ENCODE measurements at regions of chr15 and their contacts with region 1.

Region 1: DNA sequence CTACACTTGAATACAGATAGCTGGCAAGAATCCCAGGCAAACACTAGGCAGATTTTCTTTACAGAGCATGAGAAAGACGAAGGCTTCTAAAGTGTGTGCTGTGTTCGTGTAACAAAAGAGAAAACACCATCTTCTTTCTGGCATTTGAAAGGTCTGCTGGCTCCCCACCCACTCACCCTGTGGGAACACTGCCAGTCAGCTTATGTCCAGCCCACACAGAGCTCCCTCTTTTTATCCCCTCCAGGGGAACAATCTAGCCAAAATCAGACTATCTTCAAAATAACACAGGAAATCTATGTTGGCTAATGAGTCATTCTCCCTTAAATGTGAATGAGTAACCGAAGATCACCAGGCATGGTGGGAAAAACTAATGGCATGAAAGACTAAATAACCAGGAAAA is 45.6 kb upstream of the PAQR5 start:
- DNase-seq: no peak
- H3K4me3 ChIP-seq: no peak overlapping the region
- H3K27ac ChIP-seq: no peak overlapping the region
- H3K4me1 ChIP-seq: peaks cover 0 to 3% (median 0%) of the 10 kb centered on the region in 4 donors
- H3K27me3 ChIP-seq: no peaks in the 10 kb centered on the region
- CTCF ChIP-seq: no peak
- EP300 ChIP-seq: no peak
- POLR2A ChIP-seq: no peak

Region 2: DNA sequence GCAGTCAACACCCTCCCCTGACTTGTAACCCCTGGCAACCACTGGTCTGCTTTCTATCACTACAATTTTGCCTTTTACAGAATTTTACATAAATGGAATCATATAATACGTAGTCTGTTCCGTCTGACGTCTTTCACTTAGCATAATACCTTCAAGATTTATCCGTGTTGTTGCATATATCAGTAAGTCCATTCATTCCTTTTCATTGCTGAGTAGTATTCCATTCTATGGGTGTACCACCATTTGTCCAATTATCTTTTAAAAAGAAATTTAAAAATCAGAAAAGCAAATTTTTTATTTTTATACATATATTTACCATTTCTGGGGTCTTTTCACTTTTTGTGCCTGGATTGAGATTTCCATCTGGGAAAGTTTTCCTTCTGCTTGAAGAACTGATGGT is 203.2 kb before region 1 on chr15:
- intact Hi-C with region 1: loop called (anchors 5 kb)
- DNase-seq: no peak
- H3K4me3 ChIP-seq: no peak overlapping the region
- H3K27ac ChIP-seq: no peak overlapping the region
- H3K4me1 ChIP-seq: no peaks in the 10 kb centered on the region
- H3K27me3 ChIP-seq: peaks cover 0 to under 1% (median 0%) of the 10 kb centered on the region in 3 donors
- CTCF ChIP-seq: no peak
- EP300 ChIP-seq: no peak
- POLR2A ChIP-seq: no peak

Measured in sigmoid colon (tissue), 7 donors.